Colonic mucosa (tissue), 4 donors: ENCODE measurements at regions of chr12 and their contacts with region 1.

Region 1: GRCh38 chr12:1130164-1130563 is 139.1 kb downstream of the ERC1 start:
- DNase-seq: peak; percentile 86
- H3K4me3 ChIP-seq: no peak overlapping the region
- H3K27ac ChIP-seq: peak overlapping the region; percentile 75
- H3K4me1 ChIP-seq: no peaks in the 10 kb centered on the region
- H3K27me3 ChIP-seq: no peaks in the 10 kb centered on the region
- CTCF ChIP-seq: no peak

Region 2: DNA sequence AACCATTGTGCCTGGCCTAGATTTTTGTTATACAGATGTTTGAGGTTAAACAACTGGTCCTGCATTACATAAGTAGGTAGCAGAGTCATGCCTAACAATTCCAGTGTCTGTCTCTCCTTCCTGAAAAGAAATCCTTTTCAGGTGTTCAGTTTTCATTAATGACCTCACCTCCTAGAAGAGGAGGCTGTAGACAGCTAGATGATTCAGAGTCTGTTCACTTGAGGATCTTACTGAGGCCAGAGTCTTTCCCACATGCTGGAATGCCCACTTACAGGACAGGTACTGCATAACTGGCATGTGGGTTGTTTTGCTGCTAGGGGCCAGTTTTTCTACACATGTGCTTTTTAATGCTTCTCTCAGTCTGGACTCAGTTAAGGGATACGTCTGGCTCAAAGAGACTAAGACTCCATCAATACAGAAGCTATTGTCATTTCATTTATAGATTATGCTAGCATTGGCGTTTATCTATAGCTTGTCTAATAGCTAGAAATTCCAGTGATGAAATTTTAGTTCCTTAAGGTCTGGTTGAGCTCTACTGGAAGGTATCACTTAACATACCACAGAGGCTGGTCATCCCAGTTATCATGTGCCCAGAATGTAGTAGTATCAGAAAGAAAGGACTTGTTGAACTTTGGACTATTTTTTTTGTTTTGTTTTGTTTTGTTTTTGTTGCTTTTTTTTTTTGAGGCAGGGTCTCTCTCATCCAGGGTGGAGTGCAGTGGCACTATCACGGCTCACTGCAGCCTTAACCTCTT is 67.3 kb after region 1 on chr12:
- intact Hi-C with region 1: no loop called
- DNase-seq: no peak
- H3K4me3 ChIP-seq: no peak overlapping the region
- H3K27ac ChIP-seq: no peak overlapping the region
- H3K4me1 ChIP-seq: no peaks in the 10 kb centered on the region
- H3K27me3 ChIP-seq: no peaks in the 10 kb centered on the region
- CTCF ChIP-seq: no peak

Region 3: GRCh38 chr12:1217191-1217949 is 87.2 kb after region 1 on chr12:
- intact Hi-C with region 1: loop called (anchors 10 kb)
- DNase-seq: peak; percentile 46
- H3K4me3 ChIP-seq: no peak overlapping the region
- H3K27ac ChIP-seq: peak overlapping the region; percentile 81
- H3K4me1 ChIP-seq: peaks cover 5% of the 10 kb centered on the region
- H3K27me3 ChIP-seq: no peaks in the 10 kb centered on the region
- CTCF ChIP-seq: no peak

Region 4: GRCh38 chr12:1398673-1399072 is 268.5 kb after region 1 on chr12:
- intact Hi-C with region 1: no loop called
- DNase-seq: no peak
- H3K4me3 ChIP-seq: no peak overlapping the region
- H3K27ac ChIP-seq: no peak overlapping the region
- H3K4me1 ChIP-seq: no peaks in the 10 kb centered on the region
- H3K27me3 ChIP-seq: no peaks in the 10 kb centered on the region
- CTCF ChIP-seq: no peak